ENCODE measurements at regions of chr1 and their contacts with region 1.

Region 1: DNA sequence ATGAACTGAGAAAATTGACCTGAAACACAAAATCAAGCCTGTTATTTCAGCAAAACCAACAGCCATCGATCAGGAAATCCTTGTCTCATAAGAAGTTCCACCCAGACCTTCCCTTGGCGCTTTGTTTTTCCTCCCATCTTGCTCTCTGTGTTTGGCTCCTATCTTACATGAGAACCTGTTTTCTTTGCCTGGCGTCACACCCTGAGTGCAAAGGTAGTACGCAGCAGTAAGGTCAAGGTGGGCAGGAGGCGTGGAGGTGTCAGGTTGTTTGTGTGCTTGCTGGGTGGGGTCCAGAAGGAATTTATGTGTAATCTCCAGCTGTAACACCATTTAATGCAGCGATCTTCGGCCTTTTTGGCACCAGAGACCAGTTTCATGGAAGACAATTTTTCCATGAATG is 50.5 kb downstream of the C1orf21 start:
- DNase-seq: no peak
- ATAC-seq: no peak
- H3K4me3 ChIP-seq: no peak overlapping the region
- H3K27ac ChIP-seq: no peak overlapping the region
- H3K4me1 ChIP-seq: no peaks in the 10 kb centered on the region
- H3K27me3 ChIP-seq: no peaks in the 10 kb centered on the region
- CTCF ChIP-seq: no peak
- POLR2A ChIP-seq: no peak
- RAD21 ChIP-seq: no peak

Region 2: DNA sequence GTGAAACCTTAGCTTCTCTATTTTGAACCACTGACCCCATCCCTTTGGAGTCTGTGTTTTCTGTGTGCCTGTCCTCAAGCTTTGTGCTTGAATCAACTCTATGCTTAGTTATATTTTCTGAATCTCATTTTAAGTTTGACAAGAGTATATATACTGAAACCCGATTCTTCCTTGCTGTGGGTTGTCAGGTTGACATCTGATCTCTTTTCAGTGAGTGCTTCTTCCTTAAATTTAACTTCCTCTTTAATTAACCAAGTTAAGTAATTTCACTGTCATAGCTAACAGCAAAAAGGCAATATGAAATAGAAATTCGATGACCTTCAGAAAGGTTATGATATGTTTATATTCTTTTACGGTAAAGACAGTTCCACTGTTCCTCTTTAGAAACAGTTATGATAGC is 18.9 kb after region 1 on chr1:
- CTCF ChIA-PET with region 1: no interaction called
- POLR2A ChIA-PET with region 1: no interaction called
- dilution Hi-C with region 1: no loop called
- in situ Hi-C with region 1: no loop called
- intact Hi-C with region 1: loop called (anchors 1 kb)
- DNase-seq: no peak
- ATAC-seq: no peak
- H3K4me3 ChIP-seq: no peak overlapping the region
- H3K27ac ChIP-seq: no peak overlapping the region
- H3K4me1 ChIP-seq: peaks cover 6% of the 10 kb centered on the region
- H3K27me3 ChIP-seq: no peaks in the 10 kb centered on the region
- CTCF ChIP-seq: no peak
- POLR2A ChIP-seq: no peak
- RAD21 ChIP-seq: no peak

Region 3: DNA sequence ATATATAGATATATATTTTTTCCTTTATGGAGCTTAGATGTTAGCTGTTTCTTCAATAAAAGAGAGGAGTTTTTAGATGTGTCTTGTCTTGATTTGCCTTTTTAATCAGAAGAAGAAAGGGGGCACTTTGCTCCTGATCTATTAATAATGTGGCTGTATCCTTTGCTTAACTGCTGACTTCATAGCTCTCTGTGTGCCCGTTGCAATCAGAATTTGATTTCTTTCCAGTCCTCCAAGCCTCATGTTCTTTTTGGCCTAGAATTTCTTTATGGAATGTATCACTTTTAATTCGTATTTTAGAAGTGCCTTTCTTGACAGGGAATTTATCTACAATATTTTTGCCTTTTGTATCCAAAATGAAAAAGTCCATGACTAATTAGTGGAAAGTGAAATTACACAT is 34.8 kb after region 1 on chr1:
- CTCF ChIA-PET with region 1: no interaction called
- POLR2A ChIA-PET with region 1: no interaction called
- dilution Hi-C with region 1: no loop called
- in situ Hi-C with region 1: no loop called
- intact Hi-C with region 1: loop called (anchors 5 kb)
- DNase-seq: no peak
- ATAC-seq: no peak
- H3K4me3 ChIP-seq: no peak overlapping the region
- H3K27ac ChIP-seq: no peak overlapping the region
- H3K4me1 ChIP-seq: no peaks in the 10 kb centered on the region
- H3K27me3 ChIP-seq: no peaks in the 10 kb centered on the region
- CTCF ChIP-seq: no peak
- POLR2A ChIP-seq: no peak
- RAD21 ChIP-seq: no peak